Activated naive CD4-positive, alpha-beta T cell treated with anti-CD3 and anti-CD28 coated beads for 36 hours (primary cell): ENCODE measurements at regions of chr2 and their contacts with region 1.

Region 1: DNA sequence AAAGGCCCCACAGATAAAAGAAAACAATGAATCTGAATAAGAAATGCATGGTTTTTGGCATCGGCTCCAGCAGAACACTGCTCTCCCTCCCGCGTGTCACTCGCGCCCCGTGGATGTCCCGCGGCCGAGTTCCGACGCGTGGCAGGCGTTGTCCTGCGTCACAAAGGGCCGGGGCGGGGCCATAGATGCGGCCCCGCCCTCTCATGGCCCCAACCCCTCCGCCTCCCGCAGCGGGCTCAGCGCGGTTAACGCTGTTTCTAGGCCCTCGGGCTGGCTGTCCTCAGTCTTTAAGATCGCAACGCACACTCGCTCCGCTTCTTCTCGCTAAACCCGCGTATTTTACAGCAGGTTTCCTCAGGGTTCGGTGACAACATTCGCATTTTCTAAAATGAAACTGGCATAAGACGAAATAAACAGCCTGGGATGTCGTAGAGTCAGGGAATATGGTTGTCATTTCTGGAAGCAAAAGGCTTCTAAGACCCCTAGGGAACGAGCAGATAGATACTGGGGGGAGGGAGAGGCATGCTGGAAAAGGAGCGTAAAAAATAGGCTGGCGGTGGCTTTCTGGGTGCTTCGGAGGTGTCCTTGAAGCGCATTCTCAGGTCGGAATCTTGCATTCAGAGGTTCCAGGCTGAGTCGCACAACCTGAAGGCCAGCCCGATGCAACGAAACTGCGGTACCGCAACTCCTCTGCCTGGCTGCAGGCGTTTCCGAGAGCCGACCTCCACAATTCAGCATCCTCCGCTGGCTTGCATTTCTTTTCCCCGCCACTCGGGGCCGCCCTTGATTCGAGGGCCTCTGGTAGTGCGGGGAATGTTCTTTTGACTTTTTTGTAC is at the start of gene FKBP7:
- DNase-seq: peak; percentile 81
- H3K4me3 Mint-ChIP-seq: peak within 1 kb of the TSS; percentile 96
- H3K27ac Mint-ChIP-seq: peak within 1 kb of the TSS; percentile 95
- H3K4me1 Mint-ChIP-seq: peaks cover 41% of the 10 kb centered on the region
- H3K27me3 Mint-ChIP-seq: no peaks in the 10 kb centered on the region
- total RNA-seq, gene FKBP7: 2.2 to 3.1 TPM

Region 2: DNA sequence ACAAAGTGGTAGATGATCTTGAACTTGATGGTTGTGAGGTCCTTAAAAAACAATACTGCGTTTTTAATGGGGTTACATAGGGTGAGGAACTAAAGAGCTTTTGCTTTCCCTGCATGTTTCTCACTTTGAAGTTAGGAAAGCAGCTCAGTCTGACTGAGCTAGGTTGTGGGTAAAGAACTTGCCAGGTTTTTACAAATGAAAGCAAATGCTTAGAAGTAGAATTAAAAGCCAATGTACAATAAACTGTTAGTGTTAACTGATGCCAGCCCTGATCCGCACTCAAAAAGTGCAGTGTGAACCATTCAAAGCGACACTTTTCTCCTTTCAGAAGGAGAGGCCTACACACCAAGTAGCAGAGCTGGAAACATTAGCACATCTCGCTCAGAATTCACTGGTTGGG is 815.8 kb before region 1 on chr2:
- CTCF ChIA-PET with region 1: no interaction called
- intact Hi-C with region 1: no loop called
- DNase-seq: no peak
- H3K4me3 Mint-ChIP-seq: no peak overlapping the region
- H3K27ac Mint-ChIP-seq: no peak overlapping the region
- H3K4me1 Mint-ChIP-seq: peaks cover 3% of the 10 kb centered on the region
- H3K27me3 Mint-ChIP-seq: no peaks in the 10 kb centered on the region

Region 3: GRCh38 chr2:178193823-178194599 is 284.6 kb before region 1 on chr2 and contains the start of gene OSBPL6:
- CTCF ChIA-PET with region 1: interaction called, 3 read pairs
- intact Hi-C with region 1: loop called (anchors 1 kb)
- DNase-seq: peak; percentile 65
- H3K4me3 Mint-ChIP-seq: peak within 1 kb of the TSS; percentile 69
- H3K27ac Mint-ChIP-seq: no peak within 1 kb of the TSS
- H3K4me1 Mint-ChIP-seq: peaks cover 3% of the 10 kb centered on the region
- H3K27me3 Mint-ChIP-seq: peaks cover 51% of the 10 kb centered on the region
- total RNA-seq, gene OSBPL6: 1.9 to 2.3 TPM

Region 4: GRCh38 chr2:178450774-178451525 is 27.7 kb before region 1 on chr2 and contains the starts of genes PJVK and PRKRA:
- CTCF ChIA-PET with region 1: interaction called, 3 read pairs
- intact Hi-C with region 1: loop called (anchors 1 kb)
- DNase-seq: peak; percentile 96
- H3K4me3 Mint-ChIP-seq: peak within 1 kb of the TSS; percentile 91
- H3K27ac Mint-ChIP-seq: peak within 1 kb of the TSS; percentile 97
- H3K4me1 Mint-ChIP-seq: peaks cover 27% of the 10 kb centered on the region
- H3K27me3 Mint-ChIP-seq: no peaks in the 10 kb centered on the region
- total RNA-seq, gene PJVK: 2.0 to 2.4 TPM
- total RNA-seq, gene PRKRA: 78.2 to 82.9 TPM

Region 5: GRCh38 chr2:178522950-178523595 is 44.4 kb after region 1 on chr2:
- CTCF ChIA-PET with region 1: interaction called, 7 read pairs
- intact Hi-C with region 1: loop called (anchors 1 kb)
- DNase-seq: peak; percentile 92
- H3K4me3 Mint-ChIP-seq: peak overlapping the region; percentile 82
- H3K27ac Mint-ChIP-seq: peak overlapping the region; percentile 87
- H3K4me1 Mint-ChIP-seq: peaks cover 48% of the 10 kb centered on the region
- H3K27me3 Mint-ChIP-seq: no peaks in the 10 kb centered on the region

Region 6: DNA sequence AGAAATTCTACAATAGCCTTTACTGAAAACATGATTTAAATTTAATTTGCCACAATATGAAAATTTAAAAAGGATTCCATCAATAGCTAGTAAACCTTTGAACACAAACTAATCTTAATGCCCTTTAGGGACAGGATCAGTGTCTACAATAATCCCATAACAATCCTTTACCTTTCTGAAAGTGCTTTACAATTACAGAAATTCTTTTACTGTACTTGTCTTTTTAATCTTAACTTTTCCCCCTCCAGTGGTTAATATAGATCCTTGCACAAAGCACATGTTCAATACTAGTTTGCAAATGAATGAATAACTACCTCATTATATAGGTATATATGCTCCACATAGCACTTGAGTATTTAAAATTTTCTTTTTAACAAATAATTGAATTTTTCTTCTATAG is 124.2 kb after region 1 on chr2:
- CTCF ChIA-PET with region 1: no interaction called
- intact Hi-C with region 1: loop called (anchors 2 kb)
- DNase-seq: no peak
- H3K4me3 Mint-ChIP-seq: no peak overlapping the region
- H3K27ac Mint-ChIP-seq: no peak overlapping the region
- H3K4me1 Mint-ChIP-seq: peaks cover 2% of the 10 kb centered on the region
- H3K27me3 Mint-ChIP-seq: no peaks in the 10 kb centered on the region

Region 7: DNA sequence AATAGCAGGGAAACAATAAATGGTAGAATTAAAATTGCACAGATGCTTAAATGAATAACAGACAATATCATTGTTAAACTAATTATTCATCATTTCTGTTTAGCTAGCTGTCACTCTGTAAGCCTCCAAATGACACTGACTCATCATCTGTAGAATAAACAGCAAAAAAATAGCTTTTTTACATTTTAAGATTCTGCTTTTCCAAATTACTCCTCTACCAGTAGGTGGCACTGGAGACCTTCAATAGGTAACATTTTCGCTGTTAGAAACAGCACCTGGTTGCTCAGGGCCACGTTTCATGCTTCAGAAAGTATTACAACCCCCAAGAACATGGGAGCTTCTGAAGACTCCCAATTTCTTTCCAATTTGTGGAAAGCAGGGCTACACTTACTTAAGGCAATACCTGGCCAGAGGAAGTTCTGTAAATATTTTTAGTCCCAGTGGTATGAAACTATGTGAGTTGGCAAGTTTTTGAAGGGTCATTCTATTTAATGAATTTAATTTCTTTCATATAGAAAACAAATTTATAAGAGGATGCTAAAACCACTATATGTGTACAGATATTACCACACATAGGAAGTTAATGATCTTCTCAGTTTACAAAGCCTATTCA is 283.2 kb after region 1 on chr2:
- CTCF ChIA-PET with region 1: no interaction called
- intact Hi-C with region 1: loop called (anchors 2 kb)
- DNase-seq: peak; percentile 51
- H3K4me3 Mint-ChIP-seq: no peak overlapping the region
- H3K27ac Mint-ChIP-seq: no peak overlapping the region
- H3K4me1 Mint-ChIP-seq: no peaks in the 10 kb centered on the region
- H3K27me3 Mint-ChIP-seq: no peaks in the 10 kb centered on the region

Region 8: DNA sequence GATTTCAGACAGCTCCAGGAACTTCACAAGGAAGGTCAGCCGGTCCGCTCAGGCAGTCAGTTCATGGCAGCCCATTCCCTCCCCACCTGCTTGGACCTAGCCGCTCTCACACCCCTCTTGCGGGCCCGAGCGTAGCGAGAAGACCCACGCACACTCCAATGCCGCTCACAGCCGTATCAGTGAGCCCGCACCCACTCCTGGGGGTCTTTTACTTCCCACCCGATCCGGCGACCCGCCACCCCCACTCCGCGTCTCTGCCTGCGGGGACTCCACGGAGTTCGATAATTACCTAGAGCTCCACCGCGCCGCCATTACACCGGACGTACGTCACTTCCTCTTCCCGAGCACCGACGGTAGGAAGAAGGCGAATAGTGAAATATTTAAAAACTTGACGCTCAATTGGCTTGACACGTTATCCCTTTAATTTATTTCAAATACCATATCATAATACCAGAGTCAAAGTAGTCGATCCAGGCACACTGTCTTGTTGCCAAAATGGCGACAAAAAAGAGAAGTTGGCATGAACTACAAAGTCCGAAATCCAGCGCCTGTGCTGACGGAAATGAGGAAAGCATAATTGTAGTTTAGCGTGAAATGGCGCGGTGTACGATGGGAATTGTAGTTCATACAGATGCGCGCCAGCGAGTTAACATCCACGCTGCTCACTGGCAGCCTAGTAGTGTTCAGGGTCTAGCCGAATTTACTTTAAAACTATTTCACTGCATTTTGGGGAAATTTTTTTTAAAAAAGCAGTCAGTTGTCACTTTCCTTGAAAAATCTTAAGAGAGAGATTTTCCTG is 1528.3 kb after region 1 on chr2 and contains the start of gene CWC22:
- CTCF ChIA-PET with region 1: no interaction called
- intact Hi-C with region 1: loop called (anchors 10 kb)
- DNase-seq: peak; percentile 93
- H3K4me3 Mint-ChIP-seq: peak within 1 kb of the TSS; percentile 92
- H3K27ac Mint-ChIP-seq: peak within 1 kb of the TSS; percentile 100
- H3K4me1 Mint-ChIP-seq: peaks cover 36% of the 10 kb centered on the region
- H3K27me3 Mint-ChIP-seq: no peaks in the 10 kb centered on the region
- total RNA-seq, gene CWC22: 20.4 TPM